Lower leg skin (tissue), 4 donors: ENCODE measurements at regions of chr1 and their contacts with region 1.

Region 1: GRCh38 chr1:199102239-199102638 is 463.4 kb downstream of the PTPRC start:
- DNase-seq: no peak
- H3K4me3 ChIP-seq: no peak overlapping the region
- CTCF ChIP-seq: no peak
- POLR2A ChIP-seq: no peak

Region 2: DNA sequence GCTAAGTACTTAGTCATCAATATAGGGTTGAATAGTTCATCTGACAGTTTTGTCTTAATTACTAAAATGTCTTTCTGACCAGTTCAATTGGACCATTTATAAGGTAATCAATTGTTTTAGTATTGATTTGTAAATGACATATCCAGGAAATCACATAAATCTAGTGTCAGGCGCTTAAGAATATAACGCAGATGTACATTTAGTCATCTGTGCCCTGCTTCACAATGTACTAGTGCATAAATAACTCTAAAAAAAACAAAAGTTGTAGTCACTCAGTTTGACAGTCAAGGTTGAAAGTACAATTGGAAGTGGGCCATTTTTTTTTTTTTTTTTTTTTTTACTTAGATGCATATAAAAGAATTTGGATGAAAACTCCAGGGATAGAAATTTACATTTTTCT is 27.0 kb after region 1 on chr1:
- intact Hi-C with region 1: loop called (anchors 2 kb)
- DNase-seq: no peak
- H3K4me3 ChIP-seq: no peak overlapping the region
- CTCF ChIP-seq: no peak
- POLR2A ChIP-seq: no peak